ENCODE measurements at regions of chr1 and their contacts with region 1.

Region 1: DNA sequence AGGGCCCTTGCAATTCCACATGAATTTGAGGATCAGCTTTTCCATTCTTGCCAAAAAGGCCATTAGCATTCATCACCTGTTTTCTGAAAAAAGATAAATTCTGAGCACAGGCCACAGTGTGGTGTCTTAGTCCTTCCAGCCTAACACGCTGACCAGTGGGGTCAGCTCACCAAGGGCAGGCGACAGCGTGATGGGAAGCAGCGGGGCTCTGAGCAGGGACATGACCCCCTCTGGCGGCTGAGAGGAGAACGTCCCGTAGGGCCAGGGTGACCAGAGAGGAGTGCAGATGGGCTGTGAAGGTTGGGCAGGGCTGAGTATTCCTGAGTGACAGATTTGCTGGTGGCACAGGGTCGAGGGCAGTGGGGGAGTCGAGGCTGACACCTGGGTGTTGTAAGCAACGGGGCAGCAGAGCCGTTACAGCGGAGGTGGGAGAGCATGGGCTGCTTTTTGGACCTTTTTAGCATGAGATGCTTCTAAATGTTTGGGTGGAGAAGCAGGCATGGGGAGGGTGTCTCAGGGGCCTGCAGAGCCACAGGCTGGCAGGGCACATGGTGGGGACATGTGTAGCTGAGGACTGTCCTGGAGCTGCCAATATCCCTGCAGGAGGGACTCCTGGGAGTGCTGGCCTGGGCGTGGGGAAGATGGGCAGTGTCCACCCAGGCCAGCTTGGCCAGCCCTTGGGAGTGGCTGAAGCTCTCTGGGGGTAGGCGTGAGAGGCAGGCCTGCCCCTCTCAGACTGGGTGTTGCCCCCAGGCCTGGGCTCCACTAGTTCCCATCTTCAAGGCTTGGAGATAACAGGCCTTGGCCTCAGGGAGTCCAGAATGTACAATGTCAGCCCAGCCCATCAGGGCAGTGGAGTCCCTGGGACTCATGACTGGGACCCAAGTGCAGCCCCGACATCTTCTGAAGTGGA is 8.6 kb upstream of the CALML6 start:
- DNase-seq: peak; percentile 57
- H3K4me3 ChIP-seq: no peak overlapping the region
- H3K27ac ChIP-seq: no peak overlapping the region
- H3K4me1 ChIP-seq: peaks cover 27% of the 10 kb centered on the region
- H3K27me3 ChIP-seq: no peaks in the 10 kb centered on the region
- CTCF ChIP-seq: peak; percentile 95 to 97

Region 2: DNA sequence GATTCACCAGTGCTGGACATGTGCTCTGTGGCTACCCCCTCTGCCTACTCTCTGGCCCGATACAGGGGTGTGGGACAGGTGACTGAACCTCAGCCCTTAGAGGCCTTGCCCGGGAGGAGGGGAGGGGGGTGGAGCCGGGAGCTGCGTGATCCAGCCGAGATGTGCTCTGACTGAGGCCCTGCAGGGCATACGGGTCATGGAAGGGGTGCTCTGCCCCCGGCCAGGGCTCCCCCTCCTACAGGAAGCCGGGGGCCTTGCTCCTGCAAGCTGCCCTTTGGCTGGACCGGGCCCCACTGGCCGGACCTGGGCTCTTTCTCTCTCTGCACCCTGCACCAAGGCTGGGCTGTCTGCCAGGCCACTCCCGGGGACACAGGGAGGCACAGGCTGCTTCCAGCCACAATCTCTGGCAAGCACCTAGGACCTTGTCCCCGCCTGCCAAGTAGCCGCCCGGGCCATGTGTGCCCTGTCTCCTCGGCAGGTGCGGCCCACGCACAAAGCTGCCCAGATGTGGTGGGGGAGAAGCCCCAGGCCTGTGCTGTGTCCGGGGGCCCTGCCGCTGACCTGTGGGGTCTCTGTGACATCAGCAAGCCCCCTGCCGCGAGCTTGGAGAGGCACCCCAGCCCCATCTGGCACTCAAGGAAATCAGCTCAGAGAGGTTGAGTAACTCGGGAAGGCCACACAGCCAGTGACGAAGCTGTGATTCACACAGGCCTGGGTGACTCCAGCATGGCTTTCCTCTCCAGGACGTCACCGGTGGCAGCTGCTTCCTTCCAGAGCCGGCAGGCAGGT is 624.7 kb before region 1 on chr1:
- CTCF ChIA-PET with region 1: no interaction called
- dilution Hi-C with region 1: no loop called
- in situ Hi-C with region 1: no loop called
- intact Hi-C with region 1: no loop called
- DNase-seq: peak; percentile 76
- H3K4me3 ChIP-seq: no peak overlapping the region
- H3K27ac ChIP-seq: no peak overlapping the region
- H3K4me1 ChIP-seq: peaks cover 14% of the 10 kb centered on the region
- H3K27me3 ChIP-seq: no peaks in the 10 kb centered on the region
- CTCF ChIP-seq: no peak

Region 3: GRCh38 chr1:1763657-1764616 is 142.5 kb before region 1 on chr1:
- CTCF ChIA-PET with region 1: no interaction called
- dilution Hi-C with region 1: no loop called
- in situ Hi-C with region 1: no loop called
- intact Hi-C with region 1: loop called (anchors 1 kb)
- DNase-seq: peak; percentile 94
- H3K4me3 ChIP-seq: no peak overlapping the region
- H3K27ac ChIP-seq: no peak overlapping the region
- H3K4me1 ChIP-seq: peaks cover 19% of the 10 kb centered on the region
- H3K27me3 ChIP-seq: no peaks in the 10 kb centered on the region
- CTCF ChIP-seq: peak in 1 of 2 donors; percentile 45

Region 4: GRCh38 chr1:1777950-1778662 is 128.3 kb before region 1 on chr1 and contains the start of gene NADK:
- CTCF ChIA-PET with region 1: no interaction called
- dilution Hi-C with region 1: no loop called
- in situ Hi-C with region 1: no loop called
- intact Hi-C with region 1: loop called (anchors 2 kb)
- DNase-seq: peak; percentile 53
- H3K4me3 ChIP-seq: peak within 1 kb of the TSS; percentile 71 to 97 (median 87)
- H3K27ac ChIP-seq: peak within 1 kb of the TSS; percentile 49
- H3K4me1 ChIP-seq: peaks cover 31% of the 10 kb centered on the region
- H3K27me3 ChIP-seq: no peaks in the 10 kb centered on the region
- CTCF ChIP-seq: no peak
- total RNA-seq, gene NADK: 34.2 to 67.8 TPM

Region 5: GRCh38 chr1:1833916-1834325 is 72.5 kb before region 1 on chr1:
- CTCF ChIA-PET with region 1: no interaction called
- dilution Hi-C with region 1: no loop called
- in situ Hi-C with region 1: no loop called
- intact Hi-C with region 1: loop called (anchors 2 kb)
- DNase-seq: no peak
- H3K4me3 ChIP-seq: no peak overlapping the region
- H3K27ac ChIP-seq: no peak overlapping the region
- H3K4me1 ChIP-seq: peaks cover 18% of the 10 kb centered on the region
- H3K27me3 ChIP-seq: no peaks in the 10 kb centered on the region
- CTCF ChIP-seq: no peak

Region 6: DNA sequence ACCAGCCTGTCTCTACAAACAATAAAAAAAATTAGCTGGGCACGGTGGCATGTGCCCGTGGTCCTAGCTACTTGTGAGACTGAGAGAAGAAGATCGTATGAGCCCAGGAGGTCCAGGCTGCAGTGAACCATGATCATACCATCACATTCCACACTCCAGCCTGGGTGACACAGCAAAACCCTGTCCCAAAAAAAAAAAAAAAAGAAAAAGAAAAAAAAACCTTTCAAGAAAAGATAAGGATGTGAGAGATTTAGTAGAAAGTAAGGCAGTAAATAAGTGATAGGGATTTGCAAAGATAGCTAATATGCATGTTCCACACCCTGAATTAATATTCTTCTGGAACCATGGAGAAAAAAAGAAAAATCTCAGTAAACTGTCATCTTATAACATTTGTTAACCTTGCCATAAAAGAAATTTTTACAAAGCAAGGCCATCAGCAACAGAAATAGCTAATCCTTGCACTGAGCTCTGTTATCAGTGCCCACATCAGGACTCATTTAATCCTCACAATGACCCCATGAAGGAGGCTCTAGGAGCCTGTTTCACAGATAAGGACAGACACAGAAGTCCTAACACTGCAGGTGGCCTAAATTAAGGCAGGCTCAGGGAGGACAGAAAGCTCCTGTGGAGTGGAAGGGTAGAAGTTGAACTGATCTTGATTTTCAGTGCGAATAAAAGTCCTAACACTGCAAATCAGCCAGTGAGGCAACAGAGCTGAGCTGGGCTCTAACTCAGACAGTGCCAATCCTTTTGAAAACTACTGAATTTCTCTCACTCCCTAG is 23.2 kb before region 1 on chr1:
- CTCF ChIA-PET with region 1: no interaction called
- dilution Hi-C with region 1: no loop called
- in situ Hi-C with region 1: no loop called
- intact Hi-C with region 1: no loop called
- DNase-seq: no peak
- H3K4me3 ChIP-seq: no peak overlapping the region
- H3K27ac ChIP-seq: no peak overlapping the region
- H3K4me1 ChIP-seq: peaks cover 5% of the 10 kb centered on the region
- H3K27me3 ChIP-seq: no peaks in the 10 kb centered on the region
- CTCF ChIP-seq: no peak